ENCODE measurements at regions of chr14 and their contacts with region 1.

Region 1: DNA sequence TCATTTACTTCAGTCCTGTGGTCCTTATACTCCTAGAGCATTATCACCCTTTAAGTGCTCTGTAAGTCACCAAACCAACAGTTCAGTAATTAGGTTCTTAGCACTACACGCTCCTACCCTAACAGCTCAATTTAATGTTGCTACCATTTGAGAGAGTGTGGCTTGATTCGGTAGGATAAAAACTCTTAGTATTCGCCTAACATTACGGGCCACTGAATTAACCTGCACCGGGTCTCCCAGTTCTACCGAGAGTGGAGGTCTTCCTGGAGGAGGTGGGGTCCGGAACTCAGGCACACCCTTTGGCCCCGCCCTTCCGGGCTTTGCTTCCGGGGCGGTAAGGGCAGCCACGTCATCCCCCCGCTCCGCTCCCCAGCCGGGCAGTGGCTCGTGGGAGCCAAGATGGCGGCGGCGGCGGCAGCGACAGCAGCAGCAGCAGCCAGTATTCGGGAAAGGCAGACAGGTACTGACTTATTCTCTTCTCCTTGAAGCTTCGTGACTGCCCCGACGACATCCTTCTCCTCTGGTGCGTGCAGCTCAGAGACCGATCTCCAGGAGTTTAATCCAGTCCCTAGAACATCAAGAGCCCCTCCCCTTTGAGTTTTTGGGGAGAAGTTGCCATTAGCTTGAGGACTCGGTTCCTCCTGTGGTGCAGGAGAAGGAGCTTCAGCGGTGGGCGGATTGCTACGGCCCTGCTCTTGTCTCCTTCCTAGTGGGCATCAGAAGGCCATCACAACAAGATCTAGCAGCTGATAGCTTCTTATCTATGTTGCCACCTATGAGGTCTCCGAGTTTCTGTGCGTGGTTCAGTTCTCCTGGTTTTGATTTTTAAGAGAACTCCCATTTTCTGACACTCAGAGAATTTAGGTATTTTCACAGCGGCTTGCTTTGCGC is at the start of gene SCFD1:
- DNase-seq: peak; percentile 38
- H3K4me3 ChIP-seq: peak within 1 kb of the TSS; percentile 69
- H3K27me3 ChIP-seq: no peaks in the 10 kb centered on the region
- CTCF ChIP-seq: no peak
- polyA plus RNA-seq, gene SCFD1: 61.0 and 115 TPM in 2 replicates

Region 2: DNA sequence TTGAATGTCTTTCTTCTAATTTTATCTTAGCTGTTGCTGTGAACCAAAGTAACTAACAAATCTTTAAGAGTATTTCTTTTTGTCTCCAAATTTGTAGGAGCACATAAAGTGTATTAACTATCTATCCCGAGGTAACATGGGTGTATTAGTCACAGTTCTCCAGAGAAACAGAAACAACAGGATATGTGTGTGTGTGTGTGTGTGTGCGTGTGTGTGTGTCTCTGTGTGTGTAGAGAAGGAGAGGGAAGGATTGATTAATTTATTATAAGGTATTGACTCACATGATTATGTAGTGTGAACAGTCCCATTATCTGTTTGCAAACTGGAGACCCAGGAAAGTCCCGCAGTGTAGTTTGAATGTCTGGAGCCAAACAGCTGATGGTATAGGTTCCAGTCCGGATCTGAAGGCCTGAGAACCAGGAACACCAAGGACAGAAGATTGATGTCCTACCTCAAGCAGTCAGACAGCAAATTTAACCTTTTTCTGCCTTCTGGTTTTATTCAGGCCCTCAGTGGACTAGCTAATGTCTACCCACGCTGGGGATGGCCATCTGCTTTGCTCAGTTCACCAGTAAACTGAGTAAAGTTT is 48.9 kb before region 1 on chr14:
- CTCF ChIA-PET with region 1: no interaction called
- POLR2A ChIA-PET with region 1: interaction called, 12 read pairs
- DNase-seq: no peak
- H3K4me3 ChIP-seq: no peak overlapping the region
- H3K27me3 ChIP-seq: no peaks in the 10 kb centered on the region
- CTCF ChIP-seq: no peak